K562 (cell line): ENCODE measurements at regions of chr15 and their contacts with region 1.

Region 1: GRCh38 chr15:57340682-57341259 is 35.5 kb upstream of the CGNL1 start:
- DNase-seq: peak; percentile 58 to 77 (median 72)
- ATAC-seq: peak; percentile 82
- H3K4me3 ChIP-seq: no peak overlapping the region
- H3K27ac ChIP-seq: no peak overlapping the region
- H3K4me1 ChIP-seq: peaks cover 5 to 10% of the 10 kb centered on the region in 2 experiments
- H3K27me3 ChIP-seq: no peaks in the 10 kb centered on the region
- CTCF ChIP-seq: peak; percentile 69 to 96 (median 86)
- EP300 ChIP-seq: no peak
- POLR2A ChIP-seq: no peak
- RAD21 ChIP-seq: peak; percentile 88 to 94

Region 2: DNA sequence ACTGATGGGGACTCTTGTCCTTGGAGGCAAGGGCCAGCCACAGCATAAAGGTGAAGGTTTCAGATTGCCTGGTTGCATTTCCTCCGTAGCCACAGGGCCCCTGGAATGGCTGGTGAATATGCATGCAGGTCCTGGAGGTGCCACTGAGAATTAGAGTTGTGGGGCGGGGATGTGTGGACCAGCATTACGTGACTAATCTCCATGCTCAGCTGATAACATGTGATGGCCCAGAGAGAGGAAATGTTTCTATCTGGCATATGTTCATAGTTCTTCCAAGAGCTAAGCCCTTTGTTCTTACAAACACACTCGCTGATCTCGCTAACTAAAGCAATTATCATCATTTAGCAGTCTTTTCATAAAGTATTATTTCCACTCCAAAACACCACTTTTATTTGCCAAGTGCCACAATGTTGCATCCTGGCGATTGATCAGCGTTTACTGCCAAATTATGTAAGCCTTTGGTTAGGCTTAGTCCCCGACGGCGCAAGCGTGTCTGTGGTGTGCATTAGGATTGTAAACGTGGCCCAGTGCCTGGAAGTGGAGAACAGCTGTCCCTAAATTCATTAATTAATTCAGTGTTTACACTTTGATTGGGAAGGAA is 91.5 kb after region 1 on chr15:
- CTCF ChIA-PET with region 1: no interaction called
- POLR2A ChIA-PET with region 1: no interaction called
- in situ Hi-C with region 1: no loop called
- intact Hi-C with region 1: loop called (anchors 10 kb)
- DNase-seq: no peak
- ATAC-seq: no peak
- H3K4me3 ChIP-seq: no peak overlapping the region
- H3K27ac ChIP-seq: no peak overlapping the region
- H3K4me1 ChIP-seq: no peaks in the 10 kb centered on the region
- H3K27me3 ChIP-seq: peaks cover 16 to 35% of the 10 kb centered on the region in 2 experiments; a peak in 4 of 5 replicates
- CTCF ChIP-seq: no peak
- EP300 ChIP-seq: no peak
- POLR2A ChIP-seq: no peak
- RAD21 ChIP-seq: no peak

Region 3: GRCh38 chr15:57534281-57534680 is 193.5 kb after region 1 on chr15:
- CTCF ChIA-PET with region 1: interaction called, 3 read pairs
- POLR2A ChIA-PET with region 1: no interaction called
- in situ Hi-C with region 1: loop called (anchors 5 kb)
- intact Hi-C with region 1: no loop called
- DNase-seq: no peak
- ATAC-seq: no peak
- H3K4me3 ChIP-seq: no peak overlapping the region
- H3K27ac ChIP-seq: no peak overlapping the region
- H3K4me1 ChIP-seq: no peaks in the 10 kb centered on the region
- H3K27me3 ChIP-seq: peaks cover 15 to 28% of the 10 kb centered on the region in 2 experiments; a peak in 4 of 5 replicates
- CTCF ChIP-seq: no peak
- EP300 ChIP-seq: no peak
- POLR2A ChIP-seq: no peak
- RAD21 ChIP-seq: no peak

Region 4: DNA sequence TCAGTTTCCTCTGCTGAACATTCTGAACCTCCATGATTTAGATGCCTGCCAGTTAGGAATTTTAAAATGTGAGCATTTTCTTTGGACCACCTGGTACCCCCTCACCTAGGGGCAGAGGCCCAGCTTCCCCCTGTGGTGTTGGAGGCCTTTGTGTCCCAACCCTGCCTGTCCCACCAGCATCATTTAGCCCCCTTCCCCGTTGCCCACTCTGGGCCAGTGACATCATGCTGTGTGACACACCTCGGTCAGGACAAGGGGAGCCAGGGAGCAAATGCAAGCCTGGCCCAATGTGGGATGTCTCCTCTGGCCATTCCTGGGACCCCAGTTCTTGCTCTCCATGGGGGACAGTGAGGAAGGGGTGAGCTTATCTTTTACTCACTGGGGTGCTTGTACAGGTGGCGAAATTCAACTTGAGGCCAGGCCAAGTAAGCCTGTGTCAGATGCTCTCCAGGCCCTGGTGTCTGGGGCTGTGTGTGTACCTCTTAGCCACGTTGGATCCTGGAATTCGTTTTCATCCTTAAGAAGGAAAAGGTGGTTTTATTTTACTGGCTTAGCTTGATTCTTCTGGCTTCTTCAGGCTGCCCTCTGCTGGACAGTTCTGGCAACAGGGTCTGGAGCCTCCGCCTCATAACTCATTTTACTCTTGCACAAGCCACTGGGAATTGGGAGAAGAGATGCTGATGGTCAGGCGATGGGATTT is 201.2 kb after region 1 on chr15:
- CTCF ChIA-PET with region 1: interaction called, 11 read pairs
- POLR2A ChIA-PET with region 1: no interaction called
- in situ Hi-C with region 1: no loop called
- intact Hi-C with region 1: loop called (anchors 1 kb)
- DNase-seq: peak; percentile 46 to 63 (median 54)
- ATAC-seq: peak; percentile 81
- H3K4me3 ChIP-seq: no peak overlapping the region
- H3K27ac ChIP-seq: no peak overlapping the region
- H3K4me1 ChIP-seq: no peaks in the 10 kb centered on the region
- H3K27me3 ChIP-seq: peaks cover 24 to 62% of the 10 kb centered on the region in 2 experiments
- CTCF ChIP-seq: peak; percentile 54 to 83 (median 77)
- EP300 ChIP-seq: no peak
- POLR2A ChIP-seq: no peak
- RAD21 ChIP-seq: peak; percentile 45 to 61; a peak in 3 of 4 replicates